Adrenal gland (tissue), 19 donors: ENCODE measurements at regions of chr5 and their contacts with region 1.

Region 1: DNA sequence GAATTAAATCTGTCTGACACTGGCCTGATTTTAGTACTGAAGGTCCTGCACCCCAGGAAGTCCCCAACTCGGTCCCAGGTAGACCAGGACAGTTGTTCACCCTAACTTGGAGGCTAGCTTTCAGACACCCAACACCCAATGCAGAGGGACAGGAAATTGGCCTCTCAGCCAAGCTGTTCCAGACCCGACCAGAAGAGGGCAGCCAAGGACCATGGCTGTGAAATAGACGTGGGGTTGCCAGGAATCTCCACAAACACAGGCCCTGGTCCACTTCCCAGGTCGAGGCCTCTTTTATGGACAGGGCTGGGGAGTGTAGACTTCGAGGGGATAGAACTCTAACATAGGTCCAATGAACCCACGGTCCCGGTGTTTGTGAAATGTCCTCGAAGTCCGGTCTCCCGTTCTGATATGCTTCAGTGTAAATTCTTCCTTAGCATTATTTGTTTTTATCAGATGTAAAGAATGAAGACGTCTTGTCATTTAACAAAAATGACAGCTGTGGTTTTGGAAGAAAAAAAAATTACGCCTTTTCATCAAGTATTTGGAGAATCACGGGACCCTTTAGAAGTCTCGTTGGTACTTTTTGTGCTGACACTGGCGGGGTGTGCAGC is 260.3 kb upstream of the ADAMTS16 start:
- DNase-seq: peak; percentile 72 to 91 (median 82)
- H3K4me3 ChIP-seq: no peak overlapping the region
- H3K27ac ChIP-seq: no peak overlapping the region
- H3K4me1 ChIP-seq: no peaks in the 10 kb centered on the region
- H3K27me3 ChIP-seq: no peaks in the 10 kb centered on the region
- CTCF ChIP-seq: peak; percentile 75 to 95 (median 90)
- POLR2A ChIP-seq: no peak

Region 2: DNA sequence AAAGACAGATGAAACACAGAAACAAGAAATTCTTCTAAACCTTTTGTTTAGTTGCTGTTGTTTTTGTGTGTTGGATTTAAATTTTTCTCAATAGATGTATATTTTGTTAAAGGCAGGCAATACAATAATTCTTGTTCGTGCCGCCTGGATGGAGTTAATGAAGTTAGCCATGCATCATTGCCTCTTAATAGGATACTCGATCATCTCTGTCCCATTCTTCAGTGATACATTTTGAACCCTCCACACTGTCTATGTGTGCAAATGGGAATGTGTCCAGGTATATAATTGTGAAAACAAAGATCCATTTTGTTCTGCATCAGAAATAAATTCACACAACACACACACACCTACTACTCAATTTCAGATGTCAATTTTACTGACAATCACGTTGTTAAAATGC is 73.8 kb after region 1 on chr5:
- intact Hi-C with region 1: no loop called
- DNase-seq: no peak
- H3K4me3 ChIP-seq: no peak overlapping the region
- H3K27ac ChIP-seq: no peak overlapping the region
- H3K4me1 ChIP-seq: no peaks in the 10 kb centered on the region
- H3K27me3 ChIP-seq: peaks cover 4% of the 10 kb centered on the region
- CTCF ChIP-seq: no peak
- POLR2A ChIP-seq: no peak

Region 3: DNA sequence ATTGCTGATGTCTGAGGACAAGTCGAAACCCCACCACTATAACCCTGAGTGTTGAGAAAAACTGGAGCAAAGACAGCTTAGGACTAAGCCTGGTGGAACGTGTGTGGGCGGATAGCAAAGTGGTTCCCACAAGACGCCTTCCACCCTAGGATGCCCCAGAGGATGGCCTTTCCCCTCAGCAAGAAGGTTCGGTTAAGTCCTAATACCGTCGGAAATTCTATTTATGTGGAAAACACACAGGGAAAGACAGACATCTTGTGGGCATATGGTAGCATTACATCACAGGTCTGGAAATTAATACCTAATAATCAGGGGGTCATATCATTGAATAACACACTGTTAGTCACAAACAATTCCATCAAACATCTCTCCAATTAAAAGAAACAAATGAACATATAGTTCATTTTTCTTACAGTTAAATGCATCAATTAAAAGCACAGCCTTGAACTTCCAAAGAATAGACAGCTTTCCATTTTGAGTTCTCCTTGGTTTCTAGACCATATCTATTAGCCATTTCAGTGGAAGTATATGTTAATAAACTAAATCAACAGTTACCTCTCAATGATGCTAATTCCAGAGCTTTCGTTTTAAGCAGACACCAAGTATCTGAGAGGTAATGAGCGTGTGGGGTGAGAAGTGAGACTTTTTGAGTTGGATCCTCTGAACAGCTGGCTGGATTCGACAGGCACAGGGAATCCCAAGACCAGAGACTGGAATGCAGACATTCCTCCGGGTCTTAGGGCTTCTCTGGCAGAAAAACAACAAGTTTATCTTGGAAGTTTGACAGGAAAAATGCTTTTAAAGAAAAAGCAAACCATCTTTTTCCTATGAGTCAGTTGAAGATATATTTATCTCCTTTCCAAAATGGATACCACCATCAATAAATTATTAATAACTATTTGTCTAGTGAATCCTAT is 539.8 kb after region 1 on chr5:
- intact Hi-C with region 1: loop called in 1 of 2 experiments (anchors 10 kb)
- DNase-seq: peak in 1 of 7 donors; percentile 11
- H3K4me3 ChIP-seq: no peak overlapping the region
- H3K27ac ChIP-seq: no peak overlapping the region
- H3K4me1 ChIP-seq: peaks cover 14 to 23% of the 10 kb centered on the region in 2 donors
- H3K27me3 ChIP-seq: no peaks in the 10 kb centered on the region
- CTCF ChIP-seq: peak; percentile 52 to 90 (median 72)
- POLR2A ChIP-seq: no peak